Mammary epithelial cell (primary cell): ENCODE measurements at regions of chrX and their contacts with region 1.

Region 1: DNA sequence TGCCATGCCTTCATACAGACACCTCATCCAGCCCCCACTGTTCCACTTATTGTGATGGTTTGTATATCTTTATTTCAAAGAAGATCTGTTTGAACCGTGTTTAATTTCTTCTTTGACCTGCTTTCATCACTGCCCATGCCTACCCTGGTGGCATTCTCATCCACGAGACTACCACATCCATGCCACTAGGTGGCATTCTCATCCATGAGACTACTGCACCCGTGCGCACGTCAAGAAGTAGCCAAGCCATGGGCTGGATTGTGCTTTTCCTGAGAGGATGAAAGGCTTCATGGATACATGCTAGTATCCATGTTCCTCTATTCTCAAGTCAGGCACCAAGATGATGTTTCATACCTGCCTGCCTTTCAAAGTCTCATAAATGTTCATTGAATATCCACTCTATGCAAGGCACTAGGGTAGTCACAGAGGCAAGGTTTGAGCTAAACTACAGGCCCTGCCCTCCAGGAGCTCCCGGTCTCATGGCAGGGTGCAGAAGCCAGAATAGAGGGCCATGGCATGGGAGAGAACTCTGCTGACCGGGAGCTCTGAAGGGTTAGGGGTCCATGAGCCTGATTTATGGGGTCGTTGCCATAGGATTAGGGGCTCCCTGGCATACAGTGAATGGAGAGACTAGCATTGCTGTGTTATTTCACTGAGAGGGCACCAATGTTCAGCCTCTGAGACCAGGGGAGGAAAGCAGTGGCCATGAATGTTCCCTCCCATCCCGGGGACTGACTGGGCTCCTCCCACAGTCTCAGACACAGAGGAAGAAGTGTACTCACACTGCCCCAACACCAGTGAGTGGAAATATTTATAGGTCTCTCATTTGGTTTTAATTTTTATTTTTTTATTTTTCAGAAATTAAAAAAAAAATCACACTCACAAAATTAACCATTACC is 24.8 kb upstream of the EOLA2 start:
- DNase-seq: peak; percentile 49
- H3K4me3 ChIP-seq: no peak overlapping the region
- H3K27ac ChIP-seq: no peak overlapping the region
- H3K4me1 ChIP-seq: no peaks in the 10 kb centered on the region
- H3K27me3 ChIP-seq: no peaks in the 10 kb centered on the region
- CTCF ChIP-seq: peak; percentile 58 to 77

Region 2: DNA sequence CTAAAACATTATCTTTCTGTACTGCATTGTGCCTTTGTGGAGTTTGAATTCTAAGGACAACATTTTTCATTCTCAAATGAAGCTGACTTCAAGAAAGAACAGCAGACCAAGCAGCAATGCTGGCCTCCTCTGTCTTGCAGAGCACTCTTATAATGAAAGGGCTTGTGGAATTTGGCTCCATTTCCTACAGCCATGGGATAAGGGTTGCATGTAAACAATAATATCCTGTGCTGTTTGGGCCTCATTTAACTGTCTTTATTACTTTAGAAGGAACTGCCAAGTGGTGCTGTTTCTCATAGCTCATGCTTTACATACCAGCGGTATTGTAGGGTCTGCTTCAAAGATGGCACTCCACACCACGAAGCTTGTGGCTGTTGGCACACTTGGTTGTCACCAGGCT is 86.5 kb after region 1 on chrX:
- CTCF ChIA-PET with region 1: no interaction called
- dilution Hi-C with region 1: no loop called
- in situ Hi-C with region 1: no loop called
- intact Hi-C with region 1: loop called (anchors 2 kb)
- DNase-seq: no peak
- H3K4me3 ChIP-seq: no peak overlapping the region
- H3K27ac ChIP-seq: no peak overlapping the region
- H3K4me1 ChIP-seq: peaks cover 26% of the 10 kb centered on the region
- H3K27me3 ChIP-seq: no peaks in the 10 kb centered on the region
- CTCF ChIP-seq: no peak

Region 3: DNA sequence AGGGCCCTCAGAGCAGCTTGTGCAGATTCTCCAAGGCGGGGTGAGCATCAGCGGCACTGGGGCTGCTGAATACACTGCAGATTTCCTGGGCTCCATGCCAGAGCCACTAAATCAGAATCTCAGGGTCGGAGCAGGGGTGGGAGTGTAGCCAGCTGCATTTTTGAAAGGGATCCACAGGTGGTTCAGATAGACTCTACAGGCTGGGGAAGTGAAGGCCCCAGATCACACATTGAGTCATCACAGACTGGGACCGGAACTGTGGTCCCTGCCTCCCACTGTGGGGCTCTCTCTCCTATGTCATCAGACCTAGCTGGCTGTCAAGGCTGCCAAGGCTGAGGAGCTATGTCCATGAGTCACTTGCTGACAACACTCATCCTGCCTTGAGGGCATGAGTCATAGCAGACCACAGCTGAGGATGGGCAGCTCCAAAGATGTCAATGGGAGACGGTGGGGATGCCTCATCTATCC is 237.7 kb after region 1 on chrX:
- CTCF ChIA-PET with region 1: no interaction called
- dilution Hi-C with region 1: no loop called
- in situ Hi-C with region 1: loop called in 1 of 2 experiments (anchors 25 kb)
- intact Hi-C with region 1: loop called (anchors 1 kb)
- DNase-seq: peak; percentile 98
- H3K4me3 ChIP-seq: no peak overlapping the region
- H3K27ac ChIP-seq: no peak overlapping the region
- H3K4me1 ChIP-seq: peaks cover 27% of the 10 kb centered on the region
- H3K27me3 ChIP-seq: no peaks in the 10 kb centered on the region
- CTCF ChIP-seq: peak in 1 of 2 donors; percentile 2

Region 4: GRCh38 chrX:150486011-150486410 is 522.9 kb after region 1 on chrX:
- CTCF ChIA-PET with region 1: no interaction called
- dilution Hi-C with region 1: no loop called
- in situ Hi-C with region 1: loop called (anchors 25 kb)
- intact Hi-C with region 1: loop called (anchors 1 kb)
- DNase-seq: peak; percentile 30
- H3K4me3 ChIP-seq: no peak overlapping the region
- H3K27ac ChIP-seq: no peak overlapping the region
- H3K4me1 ChIP-seq: peaks cover 8% of the 10 kb centered on the region
- H3K27me3 ChIP-seq: no peaks in the 10 kb centered on the region
- CTCF ChIP-seq: peak; percentile 50 to 66

Region 5: DNA sequence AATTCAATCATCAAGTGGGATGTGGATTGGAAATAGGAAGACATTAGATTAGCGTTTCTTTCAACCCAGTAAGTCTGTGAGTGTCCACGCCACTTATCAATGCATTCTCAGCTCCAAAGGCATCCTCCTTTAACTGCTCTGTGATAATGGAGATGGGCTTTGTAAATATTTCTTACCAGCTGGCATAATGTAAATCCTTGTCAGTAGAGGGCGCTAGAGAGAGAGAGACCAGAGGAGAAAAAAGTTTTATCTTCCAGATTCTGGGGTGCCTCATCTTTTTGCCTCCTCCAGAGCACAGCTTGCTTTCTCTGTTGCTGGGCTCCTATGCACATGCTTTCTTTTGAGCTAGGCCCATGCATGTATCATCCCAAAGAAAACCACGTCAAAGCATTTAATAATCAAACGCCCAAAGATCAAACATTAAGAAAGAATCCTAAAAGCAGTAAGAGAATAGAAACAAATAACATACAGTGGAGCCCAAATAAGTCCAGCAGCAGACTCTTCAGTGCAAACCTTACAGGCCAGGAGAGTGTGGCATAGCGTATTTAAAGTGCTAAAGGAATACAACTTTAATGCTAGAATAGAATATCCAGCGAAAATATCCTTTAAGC is 720.5 kb after region 1 on chrX:
- CTCF ChIA-PET with region 1: no interaction called
- dilution Hi-C with region 1: no loop called
- in situ Hi-C with region 1: loop called (anchors 25 kb)
- intact Hi-C with region 1: loop called (anchors 2 kb)
- DNase-seq: peak; percentile 27
- H3K4me3 ChIP-seq: no peak overlapping the region
- H3K27ac ChIP-seq: no peak overlapping the region
- H3K4me1 ChIP-seq: peaks cover 8% of the 10 kb centered on the region
- H3K27me3 ChIP-seq: no peaks in the 10 kb centered on the region
- CTCF ChIP-seq: peak; percentile 34 to 53

Region 6: DNA sequence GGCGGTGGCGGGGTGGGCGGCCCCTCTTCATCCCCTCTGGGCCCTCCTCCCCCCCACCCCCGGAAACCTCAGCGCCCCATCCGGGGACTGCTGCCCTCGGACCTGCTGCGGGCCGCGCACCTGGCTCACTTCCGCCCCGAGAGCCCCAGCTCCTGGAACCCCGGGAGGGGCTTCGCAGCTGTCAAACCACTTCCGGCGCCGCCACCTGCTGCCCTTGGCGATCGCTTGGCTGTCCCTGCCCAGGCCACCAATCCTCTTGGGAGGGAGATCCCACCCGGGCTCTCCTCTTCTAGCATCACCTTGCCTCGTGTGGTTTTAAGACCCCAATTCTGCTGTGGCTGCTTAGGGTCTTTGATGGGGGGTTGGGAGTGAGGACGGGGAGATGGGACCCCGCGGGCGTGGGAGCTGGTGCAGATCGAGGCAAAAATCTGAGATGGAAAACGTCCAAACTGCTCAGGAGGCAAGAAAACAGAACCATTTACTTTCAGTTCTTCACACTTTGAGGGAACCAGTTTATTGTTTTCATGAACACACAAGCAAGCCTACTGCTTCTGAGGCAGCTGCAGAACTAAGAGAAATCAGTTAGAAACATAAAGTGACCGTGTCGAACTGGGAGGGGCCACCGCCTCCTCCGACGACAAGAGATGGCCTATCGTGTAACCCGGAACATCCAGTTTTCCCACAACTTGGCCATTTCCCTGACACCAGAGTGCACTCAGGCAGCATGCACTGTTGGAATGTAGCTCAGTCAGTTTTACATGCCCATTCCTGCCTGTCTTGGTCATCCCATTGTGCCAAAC is 730.9 kb after region 1 on chrX:
- CTCF ChIA-PET with region 1: no interaction called
- dilution Hi-C with region 1: no loop called
- in situ Hi-C with region 1: loop called (anchors 25 kb)
- intact Hi-C with region 1: no loop called
- DNase-seq: peak; percentile 95
- H3K4me3 ChIP-seq: peak overlapping the region; percentile 29 to 44 (median 42)
- H3K27ac ChIP-seq: peak overlapping the region; percentile 97
- H3K4me1 ChIP-seq: peaks cover 25% of the 10 kb centered on the region
- H3K27me3 ChIP-seq: no peaks in the 10 kb centered on the region
- CTCF ChIP-seq: no peak

Region 7: GRCh38 chrX:150715184-150715583 is 752.1 kb after region 1 on chrX:
- CTCF ChIA-PET with region 1: no interaction called
- dilution Hi-C with region 1: no loop called
- in situ Hi-C with region 1: no loop called
- intact Hi-C with region 1: loop called (anchors 2 kb)
- DNase-seq: peak; percentile 23
- H3K4me3 ChIP-seq: no peak overlapping the region
- H3K27ac ChIP-seq: no peak overlapping the region
- H3K4me1 ChIP-seq: no peaks in the 10 kb centered on the region
- H3K27me3 ChIP-seq: no peaks in the 10 kb centered on the region
- CTCF ChIP-seq: no peak